A549 (cell line): ENCODE measurements at regions of chr15 and their contacts with region 1.

Region 1: GRCh38 chr15:49855917-49856637 is 235.2 kb downstream of the DTWD1 start:
- DNase-seq: peak in 1 of 2 experiments; percentile 91
- ATAC-seq: peak; percentile 86 to 91
- H3K4me3 ChIP-seq: no peak overlapping the region
- H3K27ac ChIP-seq: peak overlapping the region; percentile 88 to 89
- H3K4me1 ChIP-seq: peaks cover 45% of the 10 kb centered on the region
- CTCF ChIP-seq: no peak
- EP300 ChIP-seq: peak; percentile 99 to 100
- POLR2A ChIP-seq: no peak
- RAD21 ChIP-seq: peak; percentile 27 to 84

Region 2: DNA sequence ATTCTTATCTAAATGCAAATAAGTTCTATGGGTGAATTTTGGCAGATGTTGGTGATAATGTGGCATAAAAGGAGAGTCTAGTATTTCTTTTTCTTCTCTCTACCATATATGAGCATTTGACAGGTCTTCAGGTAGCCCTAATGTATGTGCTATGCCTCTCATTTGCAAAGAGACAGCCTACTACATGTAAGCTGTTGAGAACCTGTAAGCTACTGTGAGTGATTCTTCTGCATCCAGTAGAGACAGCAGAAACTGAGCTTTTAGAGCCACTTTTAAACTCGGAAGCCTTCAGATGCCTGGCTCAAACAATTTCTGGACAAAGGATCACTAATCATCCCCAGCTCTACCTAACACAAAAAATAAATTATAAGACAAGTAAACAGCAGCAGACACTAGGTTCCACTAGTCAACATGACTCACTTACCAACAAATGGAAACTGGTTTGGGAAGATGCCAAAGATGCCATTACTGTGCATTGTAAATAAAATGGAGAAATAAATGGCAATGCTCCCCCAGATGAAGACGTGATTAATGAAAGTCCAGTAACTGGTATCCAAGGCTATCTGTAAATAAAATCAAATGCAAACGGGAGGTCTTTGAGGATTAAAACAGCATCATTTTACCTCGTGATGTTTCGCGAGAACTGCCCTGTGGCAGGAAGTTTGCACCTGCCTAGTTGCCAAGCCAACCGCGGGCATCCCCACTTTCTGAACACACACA is 10.0 kb after region 1 on chr15:
- CTCF ChIA-PET with region 1: interaction called, 10 read pairs
- POLR2A ChIA-PET with region 1: interaction called, 9 read pairs
- DNase-seq: peak; percentile 44 to 93
- ATAC-seq: peak; percentile 87 to 90
- H3K4me3 ChIP-seq: 0 out of 3 replicates have a peak overlapping the region, but pooled peaks have one; percentile 9
- H3K27ac ChIP-seq: peak overlapping the region; percentile 75 to 77
- H3K4me1 ChIP-seq: peaks cover 30% of the 10 kb centered on the region
- CTCF ChIP-seq: no peak
- EP300 ChIP-seq: peak; percentile 88 to 90; a peak in 4 of 5 replicates
- POLR2A ChIP-seq: no peak
- RAD21 ChIP-seq: peak; percentile 18 to 25; a peak in 4 of 5 replicates